ENCODE measurements at regions of chr13 and their contacts with region 1.

Region 1: DNA sequence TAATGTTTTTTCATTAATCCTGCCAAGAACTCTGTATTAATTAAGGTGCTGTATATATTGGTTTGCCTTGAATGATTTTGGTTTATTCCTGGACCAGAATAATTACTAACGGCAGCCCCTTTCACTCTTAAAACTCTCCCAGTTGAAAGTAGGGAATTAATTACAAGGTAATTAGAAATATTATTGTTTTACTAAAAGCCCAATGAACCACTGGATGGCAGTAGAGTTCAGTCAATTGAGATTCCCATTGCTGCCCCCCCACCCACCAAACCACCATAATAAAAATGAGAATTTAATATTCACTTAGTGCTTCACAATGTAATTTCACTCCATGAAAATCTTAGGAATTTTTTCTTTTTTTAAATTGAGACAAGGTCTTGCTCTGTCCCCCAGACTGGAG is 13.7 kb downstream of the WBP4 start:
- DNase-seq: no peak
- ATAC-seq: peak; percentile 31

Region 2: GRCh38 chr13:40863723-40864122 is 211.3 kb before region 1 on chr13:
- intact Hi-C with region 1: no loop called
- DNase-seq: no peak
- ATAC-seq: no peak

Region 3: DNA sequence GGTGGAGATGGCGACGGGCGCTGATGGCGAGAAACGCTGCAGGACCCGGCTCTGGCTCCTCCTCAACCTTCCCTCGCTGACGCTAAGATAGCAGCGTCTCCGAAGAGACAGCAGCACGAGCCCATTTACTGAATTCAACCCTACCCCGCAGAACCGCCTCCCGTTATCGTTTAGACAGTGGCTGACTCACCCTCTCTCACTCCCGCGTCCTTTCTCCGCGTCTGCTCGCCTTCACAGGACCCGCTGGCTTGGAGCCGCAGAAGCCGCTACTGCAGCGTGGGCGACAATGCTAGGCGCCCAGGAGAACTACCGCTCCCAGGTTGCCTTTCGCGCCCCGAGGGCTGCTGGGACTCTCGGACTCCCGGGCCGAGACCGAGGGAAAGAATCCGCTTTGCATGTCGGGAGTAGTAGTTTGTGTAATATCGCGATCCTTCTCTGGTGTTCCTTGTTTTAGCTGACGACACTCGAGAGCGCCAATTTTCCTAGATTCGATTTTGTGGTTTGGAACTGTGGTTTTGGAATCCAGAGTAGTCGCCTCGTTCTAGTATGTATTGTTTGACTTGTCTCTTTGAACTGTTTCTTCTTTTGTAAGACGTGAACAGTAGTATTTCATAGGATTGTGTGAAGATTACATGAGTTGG is 57.6 kb after region 1 on chr13 and contains the start of gene KBTBD6:
- intact Hi-C with region 1: loop called (anchors 5 kb)
- DNase-seq: peak; percentile 97
- ATAC-seq: peak; percentile 99
- total RNA-seq, gene KBTBD6: 7.7 TPM

Region 4: DNA sequence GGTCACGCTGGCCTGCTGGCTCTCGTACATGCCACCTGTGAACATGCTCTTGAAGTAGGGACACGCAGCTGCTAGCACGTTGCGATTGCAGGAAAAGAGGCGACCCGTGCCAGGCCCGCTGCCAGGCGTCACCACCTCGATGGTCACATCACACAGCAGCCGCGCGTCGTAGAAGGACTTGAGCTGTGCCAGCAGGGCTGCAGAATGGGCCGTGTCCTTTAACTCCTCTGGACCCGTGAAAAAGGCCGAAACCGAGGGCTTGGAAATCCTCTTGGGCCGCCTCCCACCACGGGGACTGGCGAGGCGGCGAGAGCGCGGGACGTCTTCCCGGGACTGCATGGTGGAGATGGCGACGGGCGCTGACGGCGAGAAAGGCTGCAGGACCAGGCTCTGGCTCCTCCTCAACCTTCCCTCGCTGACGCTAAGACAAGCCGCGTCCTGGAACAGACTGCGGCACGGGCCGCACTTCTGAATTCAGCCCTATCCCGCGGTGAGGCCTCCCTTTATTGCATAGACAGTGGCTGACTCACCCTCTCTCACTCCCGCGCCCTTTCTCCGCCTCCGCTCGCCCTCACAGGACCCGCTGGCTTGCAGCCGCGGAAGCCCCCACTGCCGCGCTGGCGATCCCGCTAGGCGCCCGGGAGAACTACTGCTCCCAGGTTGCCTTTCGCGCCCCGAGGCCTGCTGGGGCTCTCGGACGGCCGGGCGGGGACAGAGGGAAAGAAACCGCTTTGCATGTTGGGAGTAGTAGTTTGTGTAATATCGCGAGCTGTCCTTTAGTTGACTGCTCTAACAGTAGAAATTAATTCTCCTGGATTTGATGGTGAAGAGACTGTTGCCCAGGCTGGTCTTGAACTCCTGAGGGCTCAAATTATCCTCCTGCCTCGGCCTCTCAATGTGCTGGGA is 119.1 kb after region 1 on chr13 and contains the start of gene KBTBD7:
- intact Hi-C with region 1: loop called (anchors 10 kb)
- DNase-seq: peak; percentile 98
- ATAC-seq: peak; percentile 99
- total RNA-seq, gene KBTBD7: 5.9 TPM

Region 5: GRCh38 chr13:41222259-41222852 is 147.3 kb after region 1 on chr13:
- intact Hi-C with region 1: loop called (anchors 2 kb)
- DNase-seq: no peak
- ATAC-seq: peak; percentile 68

Measured in Right ventricle myocardium inferior (tissue), 1 donor.